ENCODE measurements at regions of chr3 and their contacts with region 1.

Region 1: GRCh38 chr3:13479581-13480339 is at the start of gene HDAC11:
- DNase-seq: peak; percentile 98
- H3K4me3 Mint-ChIP-seq: peak within 1 kb of the TSS; percentile 89
- H3K27ac Mint-ChIP-seq: peak within 1 kb of the TSS; percentile 74
- H3K4me1 Mint-ChIP-seq: peaks cover 16% of the 10 kb centered on the region
- H3K27me3 Mint-ChIP-seq: no peaks in the 10 kb centered on the region
- total RNA-seq, gene HDAC11: 3.3 to 4.3 TPM

Region 2: DNA sequence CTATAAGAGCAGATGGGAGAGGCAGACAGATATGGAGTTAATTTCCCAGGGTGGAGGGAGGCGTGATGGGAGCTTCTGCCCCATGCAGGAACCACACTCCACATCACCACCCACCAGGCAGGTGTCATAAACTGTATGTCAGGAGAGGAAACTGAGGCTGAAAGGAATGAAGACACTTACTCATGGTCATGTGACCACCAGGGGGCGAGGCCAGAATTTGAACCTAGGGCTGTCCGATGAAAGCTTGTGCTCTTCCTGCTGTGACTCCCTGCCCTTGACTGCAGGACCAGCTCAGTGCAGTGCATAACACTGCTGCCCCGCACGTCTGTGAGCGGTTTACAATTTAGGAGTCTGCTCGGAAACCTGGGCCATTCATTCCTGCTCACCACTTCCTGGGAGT is 88.5 kb before region 1 on chr3:
- CTCF ChIA-PET with region 1: no interaction called
- POLR2A ChIA-PET with region 1: no interaction called
- intact Hi-C with region 1: no loop called
- DNase-seq: peak; percentile 23
- H3K4me3 Mint-ChIP-seq: no peak overlapping the region
- H3K27ac Mint-ChIP-seq: no peak overlapping the region
- H3K4me1 Mint-ChIP-seq: peaks cover 10% of the 10 kb centered on the region
- H3K27me3 Mint-ChIP-seq: no peaks in the 10 kb centered on the region

Region 3: DNA sequence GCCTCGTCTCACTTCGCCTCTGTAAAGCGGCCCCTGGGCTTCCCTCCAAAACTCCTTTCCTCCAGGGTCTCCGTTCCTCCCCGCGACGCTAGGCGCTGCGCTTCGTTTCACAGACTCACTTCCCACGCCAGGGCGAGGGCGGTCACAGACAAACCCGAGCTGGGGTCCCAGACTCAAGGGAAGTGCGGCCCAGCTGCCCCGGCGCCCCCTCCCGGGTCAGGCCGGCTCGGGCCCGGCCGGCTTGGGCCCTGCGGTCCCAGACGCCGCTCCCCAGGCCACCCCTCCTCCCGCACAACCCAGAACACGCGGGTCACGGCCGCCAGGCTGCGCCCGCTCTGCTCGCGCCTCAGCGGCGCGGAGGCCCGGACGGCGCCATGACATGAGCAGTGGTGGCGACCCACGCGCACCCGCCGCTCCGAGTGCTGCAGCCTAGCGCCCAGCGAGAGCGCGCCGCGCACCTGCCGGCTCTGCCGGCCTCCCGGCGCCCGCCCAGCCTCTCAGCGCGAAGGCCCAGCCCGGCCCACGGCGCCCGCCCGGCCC is 60.2 kb before region 1 on chr3:
- CTCF ChIA-PET with region 1: no interaction called
- POLR2A ChIA-PET with region 1: interaction called, 9 read pairs
- intact Hi-C with region 1: loop called (anchors 2 kb)
- DNase-seq: peak; percentile 68
- H3K4me3 Mint-ChIP-seq: peak overlapping the region; percentile 90
- H3K27ac Mint-ChIP-seq: peak overlapping the region; percentile 90
- H3K4me1 Mint-ChIP-seq: peaks cover 57% of the 10 kb centered on the region
- H3K27me3 Mint-ChIP-seq: no peaks in the 10 kb centered on the region

Region 4: DNA sequence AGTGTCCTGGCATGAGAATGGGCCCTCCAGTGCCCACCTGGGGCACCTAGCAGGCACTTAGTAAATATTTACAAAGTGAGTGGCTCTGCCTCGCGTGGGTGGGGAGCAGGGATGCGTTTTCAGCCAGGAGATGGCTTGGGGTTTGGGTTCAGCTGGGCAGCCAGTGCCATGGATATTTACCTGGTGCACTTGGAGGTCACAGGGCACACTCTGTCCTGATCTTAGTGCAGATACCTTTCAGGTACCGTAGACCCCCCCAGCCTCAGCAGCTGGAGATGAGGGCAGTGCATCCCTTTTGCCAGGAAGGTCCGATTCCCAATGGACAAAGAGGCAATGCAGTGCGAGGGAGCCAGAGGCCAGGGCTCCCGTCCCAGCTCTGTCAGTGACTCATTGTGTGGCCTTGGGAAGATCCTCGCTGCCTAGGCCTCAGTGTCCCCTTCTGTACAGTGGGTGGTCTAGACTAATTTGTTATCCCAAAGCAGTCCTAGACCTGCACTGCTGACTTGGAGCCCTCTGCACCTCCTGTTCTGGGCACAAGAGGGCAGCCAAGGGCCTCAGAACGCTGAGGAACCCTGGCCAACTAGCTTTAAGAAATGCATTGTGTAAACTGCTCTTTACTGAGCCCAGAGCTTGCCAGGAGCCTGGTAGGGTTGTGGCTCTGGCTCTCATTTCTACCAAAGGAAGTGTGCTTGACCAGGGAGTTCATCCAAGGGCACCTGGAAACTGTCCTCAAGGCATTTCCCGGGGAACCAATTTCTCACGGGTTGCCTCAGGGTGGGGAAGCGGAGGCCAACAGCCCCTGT is 16.4 kb after region 1 on chr3:
- CTCF ChIA-PET with region 1: interaction called, 12 read pairs
- POLR2A ChIA-PET with region 1: interaction called, 3 read pairs
- intact Hi-C with region 1: no loop called
- DNase-seq: peak; percentile 82
- H3K4me3 Mint-ChIP-seq: no peak overlapping the region
- H3K27ac Mint-ChIP-seq: no peak overlapping the region
- H3K4me1 Mint-ChIP-seq: no peaks in the 10 kb centered on the region
- H3K27me3 Mint-ChIP-seq: no peaks in the 10 kb centered on the region

Region 5: DNA sequence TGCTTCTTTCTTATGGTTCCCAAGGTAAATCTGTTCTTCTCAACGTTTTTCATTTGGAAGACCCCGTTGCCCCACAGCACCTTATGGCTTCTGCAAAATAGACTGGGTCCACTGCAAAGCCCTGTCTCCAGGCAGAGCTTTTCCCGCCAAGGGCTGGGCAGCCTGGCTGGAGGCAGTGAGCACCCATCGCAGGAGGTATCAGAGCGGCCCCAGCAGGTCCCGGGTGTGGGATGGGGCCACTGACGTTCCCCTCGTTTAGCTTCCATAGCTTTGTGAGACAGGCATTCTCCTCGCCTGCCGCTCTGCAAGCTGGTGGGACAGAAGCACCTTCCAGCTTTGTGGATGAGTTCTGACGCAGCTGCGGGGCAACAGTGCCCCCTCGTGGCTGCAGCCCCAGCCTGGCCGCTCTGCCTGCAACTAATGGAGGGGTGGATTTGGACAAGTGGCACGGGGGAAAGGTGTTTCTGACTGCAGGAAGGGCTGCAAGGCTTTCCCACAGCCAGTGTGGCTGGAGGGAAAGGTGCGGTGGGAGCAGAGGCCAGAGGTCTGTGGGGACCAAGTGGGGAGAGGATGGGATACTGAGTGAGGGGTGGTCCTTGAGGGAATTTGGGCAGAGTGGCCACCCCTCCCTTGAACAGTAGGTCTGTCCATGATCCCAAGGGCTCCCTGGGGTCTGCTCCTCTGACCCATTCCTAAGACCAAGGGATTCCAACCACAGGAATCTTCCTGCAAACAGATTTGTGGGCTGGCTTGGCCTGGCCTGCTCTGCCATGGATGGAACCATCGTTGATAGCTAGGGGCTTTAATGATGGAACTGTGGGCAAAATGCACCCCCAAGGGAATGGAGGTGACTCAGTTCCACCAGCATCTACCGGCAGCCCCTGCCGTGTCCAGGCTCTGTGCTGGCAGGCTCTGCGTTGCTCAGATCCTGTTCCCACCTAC is 168.6 kb after region 1 on chr3:
- CTCF ChIA-PET with region 1: interaction called, 38 read pairs
- POLR2A ChIA-PET with region 1: no interaction called
- intact Hi-C with region 1: no loop called
- DNase-seq: peak; percentile 84
- H3K4me3 Mint-ChIP-seq: peak overlapping the region; percentile 18
- H3K27ac Mint-ChIP-seq: peak overlapping the region; percentile 14
- H3K4me1 Mint-ChIP-seq: peaks cover 23% of the 10 kb centered on the region
- H3K27me3 Mint-ChIP-seq: peaks cover 8% of the 10 kb centered on the region

Region 6: DNA sequence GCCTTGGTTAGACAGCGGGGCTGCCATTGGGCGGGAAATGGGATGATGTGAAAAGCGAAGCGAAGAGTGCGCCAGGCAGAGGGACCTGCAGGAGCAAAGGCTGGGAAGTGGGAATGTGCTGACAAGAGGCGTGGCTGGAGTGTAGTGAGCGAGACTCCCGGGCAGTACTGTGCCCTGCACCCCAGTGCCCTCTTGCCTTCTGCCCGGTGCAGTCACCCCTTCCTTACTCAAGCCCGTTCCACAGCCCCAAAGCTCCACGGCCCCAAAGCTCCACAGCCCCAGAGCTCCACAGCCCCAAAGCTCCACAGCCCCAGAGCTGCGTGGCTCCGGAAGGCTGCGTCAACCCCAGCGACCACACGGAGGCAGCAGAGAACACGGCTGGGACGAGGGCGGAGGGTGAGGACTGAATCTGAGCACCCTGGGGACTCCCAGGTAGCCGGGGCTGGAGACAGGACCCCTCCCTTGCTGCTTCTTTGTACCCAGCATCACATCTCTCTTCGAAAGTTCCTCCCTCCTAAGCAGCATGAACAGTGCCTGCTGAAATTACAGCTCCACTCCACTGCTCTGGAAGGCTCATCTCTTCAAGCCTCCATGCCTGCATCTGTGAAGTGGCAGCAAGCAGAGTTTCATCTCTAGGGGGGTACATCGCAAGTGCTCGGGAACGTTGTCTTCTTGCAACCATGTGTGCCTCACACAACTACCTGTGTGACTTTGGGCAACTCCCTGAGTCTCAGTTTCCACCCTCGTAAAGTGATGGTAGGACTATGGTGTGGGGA is 178.1 kb after region 1 on chr3:
- CTCF ChIA-PET with region 1: interaction called, 12 read pairs
- POLR2A ChIA-PET with region 1: no interaction called
- intact Hi-C with region 1: no loop called
- DNase-seq: peak; percentile 75
- H3K4me3 Mint-ChIP-seq: no peak overlapping the region
- H3K27ac Mint-ChIP-seq: no peak overlapping the region
- H3K4me1 Mint-ChIP-seq: peaks cover 27% of the 10 kb centered on the region
- H3K27me3 Mint-ChIP-seq: peaks cover 12% of the 10 kb centered on the region

Region 7: DNA sequence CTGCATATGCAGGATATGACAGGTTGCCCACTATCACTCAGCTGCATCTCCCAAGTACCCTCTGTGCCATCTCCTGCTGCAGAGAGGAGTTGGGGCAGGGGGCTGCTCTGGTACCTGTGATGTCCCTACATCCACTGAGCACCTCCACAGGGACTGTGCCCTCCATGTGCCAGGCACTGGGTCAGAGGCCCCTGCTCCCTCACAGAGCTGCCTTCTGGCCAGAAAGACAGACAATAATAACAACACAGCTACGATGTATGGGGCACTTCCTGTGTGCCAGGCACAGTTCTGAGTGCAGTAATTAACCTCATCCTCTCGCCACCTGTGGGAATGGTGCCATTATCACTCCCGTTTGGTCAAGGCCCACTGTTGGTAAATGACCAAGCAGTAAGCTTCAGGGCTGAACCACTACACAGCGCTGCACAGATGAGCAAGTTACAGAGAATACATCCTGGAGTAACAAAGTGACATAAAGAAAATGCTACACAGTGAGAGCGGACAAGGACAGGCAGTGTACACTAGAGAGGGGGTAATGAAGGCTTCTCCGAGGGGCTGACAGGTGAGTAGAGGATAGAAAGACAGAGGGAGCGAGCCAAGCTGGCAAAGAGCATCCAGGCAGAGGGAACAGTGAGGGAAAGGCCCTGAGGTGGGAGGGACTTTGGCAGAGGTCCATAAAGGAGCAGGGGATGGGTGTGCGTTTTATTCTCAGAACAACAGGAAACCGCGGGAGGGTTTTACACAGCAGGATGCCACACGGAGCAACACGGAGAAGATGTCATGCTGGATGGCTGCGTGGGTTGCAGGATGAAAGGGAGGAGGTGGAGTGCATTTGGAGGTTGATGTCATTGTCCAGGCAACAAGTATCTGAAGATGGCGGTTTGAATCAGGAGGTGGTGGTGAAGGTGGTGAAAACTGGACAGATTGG is 386.5 kb after region 1 on chr3:
- CTCF ChIA-PET with region 1: no interaction called
- POLR2A ChIA-PET with region 1: no interaction called
- intact Hi-C with region 1: loop called (anchors 5 kb)
- DNase-seq: peak; percentile 87
- H3K4me3 Mint-ChIP-seq: peak overlapping the region; percentile 2
- H3K27ac Mint-ChIP-seq: peak overlapping the region; percentile 83
- H3K4me1 Mint-ChIP-seq: peaks cover 52% of the 10 kb centered on the region
- H3K27me3 Mint-ChIP-seq: no peaks in the 10 kb centered on the region

Measured in activated CD4-positive, alpha-beta memory T cell treated with anti-CD3 and anti-CD28 coated beads for 36 hours (primary cell).